ENCODE measurements at regions of chr16 and their contacts with region 1.

Region 1: GRCh38 chr16:31179747-31180459 is at the start of gene FUS:
- DNase-seq: peak; percentile 92
- H3K4me3 Mint-ChIP-seq: peak within 1 kb of the TSS; percentile 99
- H3K27ac Mint-ChIP-seq: peak within 1 kb of the TSS; percentile 100
- H3K4me1 Mint-ChIP-seq: peaks cover 51% of the 10 kb centered on the region
- H3K27me3 Mint-ChIP-seq: no peaks in the 10 kb centered on the region
- total RNA-seq, gene FUS: 424 to 435 TPM

Region 2: DNA sequence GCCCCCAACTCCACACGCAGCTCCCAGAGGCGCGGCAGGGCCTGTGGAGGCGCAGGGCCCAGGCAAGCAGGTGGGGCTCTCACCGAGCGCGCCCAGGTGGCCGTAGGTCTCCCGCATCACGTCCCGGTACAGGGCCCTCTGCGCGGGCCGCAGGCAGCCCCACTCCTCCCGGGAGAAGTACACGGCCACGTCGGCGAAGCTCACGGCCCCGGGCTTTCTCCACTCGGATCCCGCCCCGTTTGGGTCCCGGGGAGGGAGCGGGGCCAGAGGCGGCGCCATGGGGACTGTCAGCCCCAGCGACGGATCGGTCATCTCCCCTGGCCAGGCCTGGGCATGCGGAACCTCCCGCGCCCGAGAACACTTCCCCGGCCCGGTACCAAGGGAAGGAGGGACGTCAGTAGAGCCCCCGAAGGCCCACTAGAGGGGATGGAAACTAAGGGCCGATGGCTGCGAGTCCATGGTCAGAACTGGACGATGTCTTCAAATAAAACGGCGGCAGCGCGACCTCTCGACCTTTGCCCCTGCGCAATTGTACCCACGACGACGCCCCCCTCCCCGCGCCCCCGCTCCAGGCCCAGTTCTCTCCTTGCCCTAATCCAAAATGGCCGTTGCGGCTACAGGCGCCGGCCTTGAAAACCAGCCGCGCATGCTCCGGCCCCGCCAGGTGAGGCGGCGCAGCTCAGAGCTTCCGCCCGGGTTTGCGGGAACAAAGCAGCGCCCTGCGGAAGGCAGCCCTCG is 645.4 kb before region 1 on chr16 and contains the start of gene ZNF747:
- CTCF ChIA-PET with region 1: no interaction called
- intact Hi-C with region 1: no loop called
- DNase-seq: peak; percentile 94
- H3K4me3 Mint-ChIP-seq: peak within 1 kb of the TSS; percentile 96
- H3K27ac Mint-ChIP-seq: peak within 1 kb of the TSS; percentile 99
- H3K4me1 Mint-ChIP-seq: peaks cover 49% of the 10 kb centered on the region
- H3K27me3 Mint-ChIP-seq: no peaks in the 10 kb centered on the region
- total RNA-seq, gene ZNF747: 5.1 to 6.1 TPM

Region 3: DNA sequence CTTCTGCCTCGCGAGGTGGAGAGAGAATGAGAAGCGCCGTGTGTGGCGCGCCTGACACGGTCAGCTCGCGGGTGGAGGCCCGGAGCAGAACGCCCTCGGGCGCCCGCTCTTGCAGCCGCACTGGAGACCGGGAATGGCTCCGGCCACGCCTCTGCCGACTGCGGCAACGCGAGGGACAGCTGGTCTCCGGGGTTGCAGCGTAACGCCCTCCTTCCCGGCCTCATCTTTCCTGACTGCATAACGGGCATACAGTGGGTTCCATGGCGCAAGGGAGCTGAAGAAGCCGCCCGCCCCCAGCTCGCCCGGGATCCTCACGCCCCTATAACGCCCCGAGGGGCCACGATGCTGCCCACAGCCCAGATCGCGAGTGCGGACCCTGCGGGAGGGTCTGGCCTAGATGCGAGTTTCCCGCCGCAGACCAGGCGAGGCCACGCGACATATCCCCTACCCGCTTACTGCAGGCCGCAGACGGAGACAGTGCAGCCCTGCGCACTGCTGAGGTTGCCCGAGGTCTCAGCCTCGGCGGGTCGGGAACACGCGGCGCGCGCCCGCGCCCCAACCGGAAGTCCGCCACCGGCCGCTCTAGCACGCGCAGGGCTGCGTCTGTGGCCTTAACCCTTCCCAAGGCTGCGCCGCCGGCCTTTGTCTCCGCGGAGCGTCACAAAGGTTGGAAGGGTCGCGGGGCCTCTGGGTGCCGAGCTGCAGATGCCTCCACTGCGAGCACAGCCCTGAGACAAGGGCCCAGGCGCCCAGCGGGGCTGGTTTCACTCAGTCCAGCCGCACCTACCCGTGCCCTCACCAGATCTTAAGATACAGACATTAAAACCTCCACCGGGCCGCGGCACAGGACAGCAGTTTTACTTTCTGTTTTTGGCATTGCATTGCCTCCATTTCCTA is 304.8 kb before region 1 on chr16:
- CTCF ChIA-PET with region 1: interaction called, 3 read pairs
- intact Hi-C with region 1: loop called (anchors 1 kb)
- DNase-seq: peak; percentile 90
- H3K4me3 Mint-ChIP-seq: peak overlapping the region; percentile 92
- H3K27ac Mint-ChIP-seq: peak overlapping the region; percentile 96
- H3K4me1 Mint-ChIP-seq: peaks cover 40% of the 10 kb centered on the region
- H3K27me3 Mint-ChIP-seq: no peaks in the 10 kb centered on the region

Region 4: DNA sequence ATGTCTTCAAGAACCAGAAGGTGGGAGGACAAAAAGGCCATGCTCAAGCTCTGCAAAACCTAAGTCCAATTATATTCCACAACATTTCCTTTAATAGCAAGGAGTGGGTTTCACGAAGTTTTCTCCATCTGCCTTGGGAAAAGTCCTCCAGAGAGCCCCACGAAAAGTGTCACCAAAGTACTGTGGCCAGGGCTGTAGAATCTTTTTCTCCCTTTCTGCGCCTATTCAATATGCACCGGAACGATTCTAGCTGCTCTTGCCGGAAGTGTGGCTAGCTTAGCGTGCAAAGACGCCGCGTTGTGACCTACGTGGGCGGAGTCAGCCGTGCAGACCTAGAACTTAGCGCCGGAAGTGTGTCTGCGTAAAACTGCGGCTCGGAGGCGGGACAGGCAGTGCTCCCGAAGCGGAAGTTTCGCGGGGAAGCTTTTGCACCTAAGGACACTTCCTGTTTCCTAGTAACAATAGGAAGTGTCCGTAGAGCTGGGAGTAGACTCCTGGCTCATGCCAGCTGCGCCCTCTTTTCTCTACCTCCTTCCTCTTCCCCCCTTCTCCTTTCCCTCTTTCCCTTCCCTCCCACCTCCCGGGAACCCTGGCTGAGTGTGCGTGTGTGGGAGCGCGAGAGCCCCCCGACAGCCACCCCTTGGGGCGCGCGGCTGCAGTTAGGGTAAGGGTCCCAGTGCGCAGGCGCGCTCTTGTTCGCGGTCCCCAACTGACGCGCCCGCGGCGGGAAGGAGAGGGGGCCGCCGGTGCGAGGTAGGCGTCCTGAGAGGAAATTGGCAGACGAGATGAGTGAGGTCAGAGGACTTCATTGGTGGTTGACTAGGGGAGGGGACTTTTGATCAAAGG is 105.7 kb before region 1 on chr16 and contains the starts of genes ZNF646 and ZNF668:
- CTCF ChIA-PET with region 1: no interaction called
- intact Hi-C with region 1: loop called (anchors 1 kb)
- DNase-seq: peak; percentile 99
- H3K4me3 Mint-ChIP-seq: peak within 1 kb of the TSS; percentile 94
- H3K27ac Mint-ChIP-seq: peak within 1 kb of the TSS; percentile 93
- H3K4me1 Mint-ChIP-seq: peaks cover 31% of the 10 kb centered on the region
- H3K27me3 Mint-ChIP-seq: no peaks in the 10 kb centered on the region
- total RNA-seq, gene ZNF646: 16.7 to 17.4 TPM
- total RNA-seq, gene ZNF668: 9.5 to 10.1 TPM

Region 5: GRCh38 chr16:31142109-31143010 is 37.5 kb before region 1 on chr16:
- CTCF ChIA-PET with region 1: interaction called, 12 read pairs
- intact Hi-C with region 1: loop called (anchors 1 kb)
- DNase-seq: peak; percentile 99
- H3K4me3 Mint-ChIP-seq: peak overlapping the region; percentile 64
- H3K27ac Mint-ChIP-seq: peak overlapping the region; percentile 84
- H3K4me1 Mint-ChIP-seq: peaks cover 12% of the 10 kb centered on the region
- H3K27me3 Mint-ChIP-seq: no peaks in the 10 kb centered on the region

Region 6: GRCh38 chr16:31221357-31222160 is 41.7 kb after region 1 on chr16:
- CTCF ChIA-PET with region 1: no interaction called
- intact Hi-C with region 1: no loop called
- DNase-seq: no peak
- H3K4me3 Mint-ChIP-seq: no peak overlapping the region
- H3K27ac Mint-ChIP-seq: no peak overlapping the region
- H3K4me1 Mint-ChIP-seq: peaks cover 4% of the 10 kb centered on the region
- H3K27me3 Mint-ChIP-seq: peaks cover 27% of the 10 kb centered on the region

Region 7: GRCh38 chr16:31354394-31355291 is 174.7 kb after region 1 on chr16 and contains the start of gene ITGAX:
- CTCF ChIA-PET with region 1: no interaction called
- intact Hi-C with region 1: loop called (anchors 1 kb)
- DNase-seq: peak; percentile 91
- H3K4me3 Mint-ChIP-seq: no peak within 1 kb of the TSS
- H3K27ac Mint-ChIP-seq: peak within 1 kb of the TSS; percentile 80
- H3K4me1 Mint-ChIP-seq: peaks cover 27% of the 10 kb centered on the region
- H3K27me3 Mint-ChIP-seq: no peaks in the 10 kb centered on the region
- total RNA-seq, gene ITGAX: 2.4 to 2.9 TPM

Region 8: DNA sequence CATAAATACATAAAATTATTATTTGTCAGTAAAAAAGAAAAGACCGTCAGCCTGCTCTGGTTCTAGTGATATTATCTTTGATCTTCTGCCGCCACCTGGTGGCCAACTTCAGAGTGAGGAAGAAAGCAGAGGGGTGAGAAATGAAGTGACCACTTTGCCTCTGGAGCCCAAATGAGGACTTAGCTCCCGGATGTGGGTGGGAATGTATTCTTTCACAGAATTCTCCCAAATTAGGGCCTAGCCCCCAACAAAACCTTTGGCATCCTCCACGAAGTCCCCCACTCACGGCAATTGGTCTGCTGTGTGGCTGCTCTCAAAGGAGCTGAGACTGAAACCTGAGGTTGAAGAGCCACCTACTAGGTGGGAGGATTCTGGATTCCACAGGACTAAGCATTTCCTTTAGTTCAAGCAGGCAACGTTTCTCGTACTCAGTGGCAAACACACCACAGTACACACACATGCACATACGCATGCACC is 688.8 kb after region 1 on chr16:
- CTCF ChIA-PET with region 1: no interaction called
- intact Hi-C with region 1: loop called (anchors 2 kb)
- DNase-seq: peak; percentile 90
- H3K4me3 Mint-ChIP-seq: peak overlapping the region; percentile 46
- H3K27ac Mint-ChIP-seq: peak overlapping the region; percentile 82
- H3K4me1 Mint-ChIP-seq: peaks cover 50% of the 10 kb centered on the region
- H3K27me3 Mint-ChIP-seq: no peaks in the 10 kb centered on the region

Measured in activated naive CD4-positive, alpha-beta T cell treated with anti-CD3 and anti-CD28 coated beads for 36 hours (primary cell).